Activated CD4-positive, alpha-beta T cell treated with anti-CD3 and anti-CD28 coated beads, Interleukin-2, amount 10 ng/mL, durations not matched to agents 7 days and 5 days (primary cell): ENCODE measurements at regions of chr14 and their contacts with region 1.

Region 1: DNA sequence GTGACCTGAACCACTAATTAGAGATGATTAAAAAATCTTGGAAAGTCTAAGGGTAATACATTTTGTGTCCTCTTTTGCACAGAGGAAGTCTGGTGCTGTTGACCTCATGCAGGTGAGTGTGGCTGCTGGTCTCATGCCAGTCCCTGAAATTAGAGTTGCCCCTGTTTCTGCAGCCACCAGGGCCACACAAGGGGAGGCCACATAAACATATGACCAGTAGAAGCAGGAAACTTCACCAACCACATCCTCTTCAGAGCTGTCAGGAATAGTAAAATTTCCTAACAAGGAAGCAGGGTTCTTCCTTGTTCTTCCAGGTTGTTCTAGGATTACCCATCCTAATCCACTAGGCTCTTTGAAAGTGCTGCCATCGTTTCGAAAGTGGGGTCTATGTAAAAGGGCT is 28.3 kb downstream of the PSMA6 start:
- DNase-seq: no peak
- H3K4me3 Mint-ChIP-seq: no peak overlapping the region
- H3K27ac Mint-ChIP-seq: peak overlapping the region; percentile 9
- H3K4me1 Mint-ChIP-seq: peaks cover 9% of the 10 kb centered on the region
- H3K27me3 Mint-ChIP-seq: no peaks in the 10 kb centered on the region

Region 2: DNA sequence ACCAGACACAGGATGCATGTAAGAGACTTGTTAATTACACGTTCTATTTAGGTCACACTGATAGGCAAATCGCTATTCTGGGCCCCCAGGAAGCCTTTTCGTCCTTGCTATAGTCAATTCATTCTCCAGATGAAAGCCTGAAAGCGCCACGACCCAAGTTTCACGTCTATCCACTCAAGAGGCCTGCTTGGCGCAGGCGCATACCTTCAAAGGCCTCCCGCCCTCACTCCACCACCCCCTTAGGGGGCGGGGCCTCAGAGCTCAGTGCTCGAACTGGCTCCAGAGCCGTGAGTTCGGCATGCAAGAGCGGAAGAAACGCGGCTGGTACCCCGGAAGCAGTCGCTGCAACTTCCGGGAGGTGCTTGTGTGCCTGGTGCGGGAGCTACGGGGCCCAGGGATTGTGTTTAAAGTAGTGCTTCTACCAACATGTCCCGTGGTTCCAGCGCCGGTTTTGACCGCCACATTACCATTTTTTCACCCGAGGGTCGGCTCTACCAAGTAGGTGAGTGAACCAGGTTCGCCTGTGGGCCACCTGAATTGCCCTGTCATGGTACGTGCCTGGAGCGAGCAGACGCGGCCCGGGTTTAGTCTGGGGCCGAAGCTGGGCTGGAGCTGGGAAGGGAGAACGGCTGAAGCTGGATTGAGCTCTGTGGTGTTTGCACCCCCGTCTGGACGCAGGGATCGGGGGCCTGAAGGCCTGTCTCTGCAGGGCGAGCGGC is 28.3 kb before region 1 on chr14 and contains the start of gene PSMA6:
- CTCF ChIA-PET with region 1: interaction called, 12 read pairs
- POLR2A ChIA-PET with region 1: no interaction called
- DNase-seq: peak; percentile 100
- H3K4me3 Mint-ChIP-seq: peak within 1 kb of the TSS; percentile 98
- H3K27ac Mint-ChIP-seq: peak within 1 kb of the TSS; percentile 96
- H3K4me1 Mint-ChIP-seq: peaks cover 44% of the 10 kb centered on the region
- H3K27me3 Mint-ChIP-seq: no peaks in the 10 kb centered on the region
- total RNA-seq, gene PSMA6: 231 to 248 TPM

Region 3: DNA sequence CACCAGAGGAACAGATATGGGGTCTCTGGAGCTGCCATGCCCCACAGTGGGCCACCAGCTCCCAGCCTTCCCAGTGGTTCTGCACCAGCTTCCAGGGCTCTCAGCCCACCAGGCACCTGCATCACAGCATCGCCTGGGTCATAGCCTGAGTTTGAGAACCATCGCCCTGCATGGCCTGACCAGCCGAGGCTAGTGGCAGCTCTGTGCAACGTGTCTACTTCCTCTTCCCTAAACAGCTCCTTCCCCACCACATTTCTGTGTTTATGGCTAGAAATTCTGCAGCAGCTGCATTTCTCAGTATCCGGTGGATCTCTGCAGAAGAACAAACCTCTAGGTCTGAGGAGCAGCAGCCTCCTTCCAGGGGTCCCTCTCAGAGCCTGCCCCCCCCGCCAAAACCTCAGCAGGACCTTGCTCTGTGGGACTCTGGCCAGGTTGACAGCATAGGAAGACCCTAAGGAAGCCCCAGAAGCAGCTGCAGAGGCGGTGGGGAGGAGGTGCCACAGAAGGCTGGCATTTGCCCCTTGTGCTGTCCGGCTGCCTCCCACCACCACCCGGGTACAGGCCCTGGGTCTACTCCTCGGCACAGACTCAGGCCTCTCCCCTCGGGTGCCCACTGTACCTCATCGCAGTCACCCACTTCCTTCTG is 19.4 kb after region 1 on chr14:
- CTCF ChIA-PET with region 1: interaction called, 10 read pairs
- POLR2A ChIA-PET with region 1: no interaction called
- DNase-seq: peak; percentile 18
- H3K4me3 Mint-ChIP-seq: no peak overlapping the region
- H3K27ac Mint-ChIP-seq: peak overlapping the region; percentile 79
- H3K4me1 Mint-ChIP-seq: peaks cover 22% of the 10 kb centered on the region
- H3K27me3 Mint-ChIP-seq: no peaks in the 10 kb centered on the region